ENCODE measurements at regions of chr3 and their contacts with region 1.

Region 1: DNA sequence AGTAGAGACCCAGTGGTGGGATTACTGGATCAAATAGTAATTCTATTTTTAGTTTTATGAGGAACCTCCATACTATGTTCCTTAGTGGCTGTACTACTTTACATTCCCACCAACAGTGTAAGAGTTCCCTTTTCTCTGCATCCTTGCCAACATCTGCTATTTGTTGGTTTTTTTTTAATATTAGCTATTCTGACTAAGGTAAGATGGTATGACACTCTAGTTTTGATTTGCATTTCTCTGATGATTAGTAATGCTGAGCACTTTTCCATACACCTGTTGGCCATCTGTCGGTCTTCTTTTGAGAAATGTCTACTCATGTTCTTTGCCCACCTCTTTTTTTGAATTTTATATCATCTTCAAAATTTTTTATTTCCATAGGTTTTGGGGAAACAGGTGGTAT is 34.2 kb upstream of the RAP2B start:
- DNase-seq: no peak
- H3K4me3 ChIP-seq: no peak overlapping the region
- H3K27ac ChIP-seq: no peak overlapping the region
- H3K4me1 ChIP-seq: peaks cover 15% of the 10 kb centered on the region
- H3K27me3 ChIP-seq: no peaks in the 10 kb centered on the region
- CTCF ChIP-seq: no peak

Region 2: DNA sequence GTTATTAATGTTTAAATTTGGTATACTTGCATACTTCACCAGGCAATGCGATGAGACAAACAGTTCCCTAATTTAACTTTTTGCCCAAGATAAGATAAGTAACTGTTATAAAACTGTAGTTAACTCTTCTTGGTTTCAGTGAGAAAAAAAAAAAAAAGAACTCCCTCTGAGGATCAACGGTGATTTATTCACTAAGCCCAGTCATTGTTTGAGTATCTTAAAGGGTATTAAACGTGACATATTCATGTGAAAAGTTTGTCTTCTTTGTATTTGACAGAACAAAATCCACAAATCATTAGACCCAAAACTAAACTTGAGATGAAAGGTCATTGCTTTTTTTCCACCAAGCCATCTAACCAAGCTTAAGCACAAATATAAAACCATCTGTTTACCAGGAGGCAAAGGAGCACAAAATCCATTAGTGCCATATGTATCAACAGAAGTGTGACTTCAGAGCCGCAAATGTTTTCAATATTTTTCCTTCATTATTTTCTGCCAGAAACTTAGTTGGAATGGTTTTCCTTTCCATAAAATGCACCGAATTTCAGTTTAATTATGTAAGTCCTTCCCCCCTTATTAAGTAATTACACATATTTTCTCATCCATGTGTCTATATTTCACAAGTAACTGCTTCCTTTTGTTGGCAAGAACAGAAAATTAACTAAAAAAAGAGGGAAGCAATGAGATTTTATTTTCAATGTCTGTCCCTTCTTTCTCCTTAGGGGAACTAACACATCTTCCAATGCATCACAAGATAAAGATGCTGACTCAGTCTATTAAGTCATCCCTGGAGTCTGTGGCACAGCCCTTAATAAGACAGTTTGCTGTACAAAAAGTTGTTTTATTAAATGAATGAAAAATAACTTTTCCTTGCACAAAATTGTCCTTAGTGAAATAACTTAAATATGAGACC is 57.9 kb before region 1 on chr3:
- CTCF ChIA-PET with region 1: no interaction called
- dilution Hi-C with region 1: no loop called
- in situ Hi-C with region 1: loop called in 1 of 2 experiments (anchors 10 kb)
- intact Hi-C with region 1: no loop called
- DNase-seq: peak; percentile 44
- H3K4me3 ChIP-seq: no peak overlapping the region
- H3K27ac ChIP-seq: no peak overlapping the region
- H3K4me1 ChIP-seq: no peaks in the 10 kb centered on the region
- H3K27me3 ChIP-seq: no peaks in the 10 kb centered on the region
- CTCF ChIP-seq: no peak